Vagina (tissue), 2 donors: ENCODE measurements at regions of chr6 and their contacts with region 1.

Region 1: GRCh38 chr6:25992413-25993037 is 29.9 kb downstream of the TRIM38 start:
- DNase-seq: peak in 1 of 2 donors; percentile 94
- H3K4me3 ChIP-seq: peak overlapping the region; percentile 60 to 66
- H3K27ac ChIP-seq: peak overlapping the region; percentile 90
- H3K4me1 ChIP-seq: peaks cover 20% of the 10 kb centered on the region
- H3K27me3 ChIP-seq: no peaks in the 10 kb centered on the region
- CTCF ChIP-seq: peak; percentile 94 to 99 (median 98)
- POLR2A ChIP-seq: peak in 1 of 2 donors; percentile 73

Region 2: DNA sequence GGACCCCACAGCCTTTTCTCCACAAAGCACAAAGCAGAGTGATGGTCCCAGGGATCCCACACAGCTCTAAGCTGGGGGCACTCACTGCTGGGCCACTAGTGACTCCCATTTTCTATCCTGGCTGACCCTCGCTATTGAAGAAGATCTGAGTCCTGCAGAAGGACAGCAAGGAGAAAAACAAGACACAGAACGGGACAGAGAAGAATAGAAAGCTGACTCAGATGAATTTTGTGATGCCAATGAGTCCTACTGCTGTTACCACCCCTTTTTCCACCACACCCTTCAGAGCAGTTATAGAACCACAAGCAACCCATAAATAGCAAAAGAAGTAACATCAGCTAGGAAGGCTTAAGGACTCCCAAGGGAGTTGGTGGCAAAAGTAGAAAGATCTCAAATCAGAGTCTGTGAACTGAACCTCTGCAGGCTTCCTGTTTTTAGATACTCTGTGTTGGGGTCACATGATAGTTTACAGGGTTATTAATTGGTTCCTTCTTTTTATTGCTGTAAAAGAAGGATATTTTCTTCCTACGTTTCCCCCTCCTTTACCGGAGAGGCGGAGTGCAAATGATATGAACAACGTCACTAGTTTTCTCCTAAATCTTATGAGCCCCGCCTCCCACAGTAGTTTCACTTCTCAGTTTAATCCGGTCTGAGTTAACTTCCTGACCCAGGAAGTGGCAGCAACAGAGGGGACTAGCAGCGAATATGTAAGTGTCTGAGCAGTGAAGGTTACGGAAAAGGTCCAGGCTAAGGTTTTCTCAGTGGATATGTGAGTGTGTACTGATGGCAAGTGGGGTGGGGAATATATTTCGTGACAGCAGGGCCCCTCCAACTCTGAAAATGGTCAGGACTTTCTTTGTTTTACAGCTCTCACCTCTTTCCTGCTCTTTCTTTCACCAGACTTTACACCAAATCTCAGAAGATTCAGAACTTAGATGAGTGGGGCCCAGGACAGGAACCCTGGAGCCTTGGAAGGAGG is 30.1 kb before region 1 on chr6 and contains the start of gene TRIM38:
- intact Hi-C with region 1: loop called (anchors 1 kb)
- DNase-seq: peak in 1 of 2 donors; percentile 94
- H3K4me3 ChIP-seq: peak within 1 kb of the TSS; percentile 59 to 71
- H3K27ac ChIP-seq: peak within 1 kb of the TSS; percentile 98
- H3K4me1 ChIP-seq: peaks cover 55% of the 10 kb centered on the region
- H3K27me3 ChIP-seq: no peaks in the 10 kb centered on the region
- CTCF ChIP-seq: no peak
- POLR2A ChIP-seq: peak in 1 of 2 donors; percentile 95
- total RNA-seq, gene TRIM38: 8.1 TPM